GM12878 (cell line): ENCODE measurements at regions of chr3 and their contacts with region 1.

Region 1: GRCh38 chr3:98563661-98564281 is 29.6 kb downstream of the CPOX start:
- DNase-seq: no peak
- ATAC-seq: peak; percentile 40
- H3K4me3 ChIP-seq: peak overlapping the region; percentile 57
- H3K27ac ChIP-seq: peak overlapping the region; percentile 100
- H3K4me1 ChIP-seq: peaks cover 46% of the 10 kb centered on the region
- H3K27me3 ChIP-seq: no peaks in the 10 kb centered on the region
- CTCF ChIP-seq: no peak
- EP300 ChIP-seq: peak; percentile 92 to 94
- POLR2A ChIP-seq: no peak; the same call in 1 of the 2 replicates
- RAD21 ChIP-seq: no peak

Region 2: DNA sequence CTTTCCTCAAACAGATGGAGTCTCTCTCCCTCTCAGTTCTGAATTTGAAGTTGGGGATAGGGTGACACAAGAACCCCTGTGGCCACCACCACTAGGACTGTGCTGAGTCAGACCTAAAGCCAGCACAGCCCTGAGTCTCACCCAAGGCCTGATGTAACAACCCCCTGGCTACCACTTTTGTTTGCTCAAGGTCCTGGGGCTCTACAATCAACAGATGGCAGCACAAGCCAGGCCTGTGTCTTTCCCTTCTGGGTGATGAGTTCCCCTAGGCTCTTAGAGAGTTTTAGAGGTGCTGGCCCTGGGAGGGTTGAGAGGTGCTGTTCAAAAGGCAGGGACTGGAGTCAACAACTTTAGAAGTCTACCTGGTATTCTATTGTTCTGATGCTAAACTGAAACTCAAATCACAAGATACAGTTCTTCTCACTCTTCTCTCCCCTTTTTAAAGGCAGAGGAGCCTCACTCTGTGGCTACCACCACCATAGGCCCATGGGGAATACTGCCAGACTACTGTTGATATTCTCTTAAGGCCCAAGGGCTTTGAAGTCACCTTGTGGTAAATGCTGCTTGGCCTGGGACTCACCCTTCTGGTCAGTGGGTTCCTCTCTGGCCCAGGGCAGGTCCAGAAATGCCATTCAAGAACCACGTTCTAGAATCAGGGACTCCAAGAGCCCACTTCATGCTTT is 203.6 kb before region 1 on chr3:
- CTCF ChIA-PET with region 1: interaction called, 3 read pairs
- POLR2A ChIA-PET with region 1: no interaction called
- RAD21 ChIA-PET with region 1: no interaction called
- SMC1A ChIA-PET with region 1: no interaction called
- in situ Hi-C with region 1: no loop called
- intact Hi-C with region 1: loop called (anchors 2 kb)
- DNase-seq: peak; percentile 48
- ATAC-seq: peak; percentile 95
- H3K4me3 ChIP-seq: no peak overlapping the region; the same call in 1 of the 2 replicates
- H3K27ac ChIP-seq: no peak overlapping the region
- H3K4me1 ChIP-seq: peaks cover 5% of the 10 kb centered on the region; the same call in 1 of the 2 replicates
- H3K27me3 ChIP-seq: no peaks in the 10 kb centered on the region
- CTCF ChIP-seq: peak; percentile 31 to 56 (median 44)
- EP300 ChIP-seq: no peak
- POLR2A ChIP-seq: no peak
- RAD21 ChIP-seq: peak; percentile 61

Region 3: DNA sequence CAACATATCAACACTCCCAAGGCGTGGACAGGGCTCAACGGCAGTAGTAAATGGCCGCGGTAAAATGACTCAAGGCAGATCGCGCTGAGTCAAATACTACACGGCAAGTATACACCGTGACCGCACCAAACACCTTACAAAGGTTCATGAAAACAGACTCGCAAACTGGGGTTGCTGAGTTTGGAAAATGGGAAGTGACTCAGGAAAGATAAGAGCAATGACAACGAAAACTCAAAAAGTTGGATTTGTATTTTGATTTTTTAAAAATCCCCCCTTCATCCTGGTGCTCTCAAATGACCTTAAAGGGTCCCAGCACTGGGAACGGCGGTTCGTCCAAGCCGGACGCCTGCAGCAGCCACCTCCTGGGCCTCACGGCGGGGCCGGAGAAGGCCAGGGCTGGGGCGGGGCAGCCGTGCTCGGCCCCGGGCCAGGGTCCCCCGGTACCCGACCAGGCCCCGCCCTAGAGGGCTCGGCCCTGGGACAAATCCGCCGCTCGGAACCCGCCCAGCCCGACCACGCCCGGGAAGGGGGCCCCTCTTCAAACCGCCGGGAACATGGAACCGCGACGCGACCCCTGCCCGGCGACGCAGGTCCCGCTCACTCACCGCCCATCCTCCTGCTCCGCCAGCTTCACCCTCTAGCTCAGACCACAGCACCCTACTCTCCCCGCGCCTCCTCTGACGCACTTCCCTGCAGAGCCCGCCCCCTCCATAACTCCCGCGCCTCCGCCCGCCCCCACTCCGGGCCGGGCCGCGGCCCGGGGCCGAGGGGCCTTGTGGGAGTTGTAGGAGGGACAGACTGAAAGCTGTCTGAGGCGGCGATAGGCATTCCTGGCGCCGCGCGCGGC is 41.3 kb before region 1 on chr3 and contains the start of gene CLDND1:
- CTCF ChIA-PET with region 1: interaction called, 11 read pairs
- POLR2A ChIA-PET with region 1: interaction called, 11 read pairs
- RAD21 ChIA-PET with region 1: interaction called, 18 read pairs
- SMC1A ChIA-PET with region 1: interaction called, 37 read pairs
- in situ Hi-C with region 1: loop called (anchors 5 kb)
- intact Hi-C with region 1: no loop called
- DNase-seq: peak; percentile 88
- ATAC-seq: peak; percentile 86
- H3K4me3 ChIP-seq: peak within 1 kb of the TSS; percentile 82
- H3K27ac ChIP-seq: peak within 1 kb of the TSS; percentile 85
- H3K4me1 ChIP-seq: peaks cover 13% of the 10 kb centered on the region; the same call in 1 of the 2 replicates
- H3K27me3 ChIP-seq: no peaks in the 10 kb centered on the region
- CTCF ChIP-seq: no peak
- EP300 ChIP-seq: no peak
- POLR2A ChIP-seq: peak; percentile 94
- RAD21 ChIP-seq: no peak
- polyA plus RNA-seq, gene CLDND1: 150 to 163 TPM

Region 4: GRCh38 chr3:98531622-98532274 is 32.0 kb before region 1 on chr3 and contains the start of gene GPR15:
- CTCF ChIA-PET with region 1: interaction called, 25 read pairs
- POLR2A ChIA-PET with region 1: interaction called, 350 read pairs
- RAD21 ChIA-PET with region 1: interaction called, 511 read pairs
- SMC1A ChIA-PET with region 1: interaction called, 603 read pairs
- in situ Hi-C with region 1: loop called (anchors 5 kb)
- intact Hi-C with region 1: loop called (anchors 1 kb)
- DNase-seq: no peak
- ATAC-seq: peak; percentile 44
- H3K4me3 ChIP-seq: peak within 1 kb of the TSS; percentile 81
- H3K27ac ChIP-seq: peak within 1 kb of the TSS; percentile 97
- H3K4me1 ChIP-seq: peaks cover 3% of the 10 kb centered on the region; the same call in 1 of the 2 replicates
- H3K27me3 ChIP-seq: no peaks in the 10 kb centered on the region
- CTCF ChIP-seq: no peak
- EP300 ChIP-seq: no peak; a peak in 1 of 4 replicates
- POLR2A ChIP-seq: no peak
- RAD21 ChIP-seq: no peak
- polyA plus RNA-seq, gene GPR15: 70.7 to 145 TPM

Region 5: DNA sequence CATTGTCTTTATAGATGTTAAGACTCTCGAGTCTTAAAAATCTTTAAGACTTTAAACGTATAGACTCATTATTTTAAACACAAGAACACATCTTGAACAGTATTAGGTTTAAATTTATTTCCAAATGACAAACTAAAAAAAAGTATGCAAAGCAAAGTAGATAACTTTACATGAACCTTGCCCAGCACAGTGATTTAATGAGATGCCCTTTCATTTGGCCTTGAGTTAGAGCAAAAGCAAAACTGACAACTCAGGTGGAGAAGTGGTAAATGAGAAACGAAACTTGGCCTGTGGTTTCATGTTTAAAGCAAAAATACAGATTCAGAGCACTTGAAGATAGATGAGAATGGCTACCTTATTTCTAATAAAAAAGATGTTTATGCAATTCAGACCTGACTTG is 23.4 kb before region 1 on chr3:
- CTCF ChIA-PET with region 1: interaction called, 24 read pairs
- POLR2A ChIA-PET with region 1: interaction called, 350 read pairs
- RAD21 ChIA-PET with region 1: interaction called, 511 read pairs
- SMC1A ChIA-PET with region 1: interaction called, 603 read pairs
- in situ Hi-C with region 1: no loop called
- intact Hi-C with region 1: loop called (anchors 1 kb)
- DNase-seq: peak; percentile 92
- ATAC-seq: peak; percentile 39
- H3K4me3 ChIP-seq: peak overlapping the region; percentile 42; the same call in 1 of the 2 replicates
- H3K27ac ChIP-seq: peak overlapping the region; percentile 51
- H3K4me1 ChIP-seq: peaks cover 32% of the 10 kb centered on the region; the same call in 1 of the 2 replicates
- H3K27me3 ChIP-seq: no peaks in the 10 kb centered on the region
- CTCF ChIP-seq: no peak
- EP300 ChIP-seq: peak; percentile 74 to 92; a peak in 3 of 4 replicates
- POLR2A ChIP-seq: no peak
- RAD21 ChIP-seq: no peak

Region 6: GRCh38 chr3:98545940-98546339 is 17.8 kb before region 1 on chr3:
- CTCF ChIA-PET with region 1: interaction called, 14 read pairs
- POLR2A ChIA-PET with region 1: interaction called, 350 read pairs
- RAD21 ChIA-PET with region 1: interaction called, 511 read pairs
- SMC1A ChIA-PET with region 1: interaction called, 603 read pairs
- in situ Hi-C with region 1: no loop called
- intact Hi-C with region 1: no loop called
- DNase-seq: no peak
- ATAC-seq: peak; percentile 49
- H3K4me3 ChIP-seq: peak overlapping the region; percentile 72
- H3K27ac ChIP-seq: peak overlapping the region; percentile 63
- H3K4me1 ChIP-seq: peaks cover 39% of the 10 kb centered on the region; the same call in 1 of the 2 replicates
- H3K27me3 ChIP-seq: no peaks in the 10 kb centered on the region
- CTCF ChIP-seq: no peak
- EP300 ChIP-seq: no peak
- POLR2A ChIP-seq: no peak
- RAD21 ChIP-seq: no peak

Region 7: DNA sequence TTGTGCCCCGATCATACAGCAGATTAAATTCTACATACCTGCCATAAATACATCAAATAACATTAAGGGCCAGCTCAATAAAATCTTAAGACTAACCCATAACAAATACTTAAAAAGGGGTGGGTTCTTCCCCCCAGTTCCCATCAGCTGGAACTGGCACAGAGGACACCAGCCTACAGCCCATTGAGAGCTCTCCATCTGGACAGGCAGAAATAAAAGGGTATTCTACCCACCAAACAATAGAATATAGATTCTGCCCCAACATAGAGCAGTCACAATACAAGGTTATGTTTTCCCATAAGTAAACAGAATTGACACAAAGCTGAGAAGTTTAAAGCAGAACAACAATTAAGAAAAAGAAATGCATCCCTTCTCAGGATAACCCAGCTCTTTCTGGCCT is 17.7 kb after region 1 on chr3:
- CTCF ChIA-PET with region 1: interaction called, 3 read pairs
- POLR2A ChIA-PET with region 1: interaction called, 11 read pairs
- RAD21 ChIA-PET with region 1: no interaction called
- SMC1A ChIA-PET with region 1: interaction called, 8 read pairs
- in situ Hi-C with region 1: no loop called
- intact Hi-C with region 1: no loop called
- DNase-seq: no peak
- ATAC-seq: no peak
- H3K4me3 ChIP-seq: no peak overlapping the region
- H3K27ac ChIP-seq: no peak overlapping the region
- H3K4me1 ChIP-seq: no peaks in the 10 kb centered on the region
- H3K27me3 ChIP-seq: no peaks in the 10 kb centered on the region
- CTCF ChIP-seq: no peak
- EP300 ChIP-seq: no peak
- POLR2A ChIP-seq: no peak
- RAD21 ChIP-seq: no peak